ENCODE measurements at regions of chr5 and their contacts with region 1.

Region 1: DNA sequence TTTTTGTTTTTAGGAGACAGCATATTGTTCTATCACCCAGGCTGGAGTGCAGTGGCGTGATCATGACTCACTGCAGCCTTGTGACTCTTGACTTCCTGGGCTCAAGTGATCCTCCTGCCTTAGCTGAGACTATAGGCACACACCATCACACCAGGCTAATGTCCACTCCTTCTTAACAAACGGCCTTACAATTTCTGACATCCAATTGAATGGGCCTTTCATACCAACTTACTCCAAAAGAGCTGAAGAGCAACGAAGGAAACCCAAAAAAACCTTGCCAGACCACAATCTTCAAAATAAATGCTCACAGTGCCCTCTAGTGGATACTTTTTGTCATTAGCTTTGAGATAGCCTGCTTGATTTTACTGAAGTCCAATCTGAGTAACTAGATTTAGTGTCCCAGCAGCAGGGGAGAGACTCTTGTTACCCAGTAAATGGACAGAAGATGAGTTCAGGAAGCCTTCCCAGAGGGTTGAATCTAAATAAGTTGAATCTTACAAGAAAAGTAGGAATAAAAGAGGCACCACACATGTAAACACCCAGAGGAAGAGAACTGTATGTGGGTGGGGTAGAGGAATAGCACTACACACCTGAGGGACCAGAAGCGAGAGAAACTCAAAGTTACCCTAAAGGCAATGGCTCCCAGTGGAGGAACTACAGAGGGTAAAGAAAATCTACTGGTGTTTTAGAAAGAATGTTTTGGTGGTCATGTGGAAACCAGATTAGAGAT is 9.3 kb downstream of the ZNF622 start:
- DNase-seq: peak; percentile 23
- ATAC-seq: peak; percentile 50

Region 2: GRCh38 chr5:16160706-16161105 is 295.6 kb before region 1 on chr5:
- intact Hi-C with region 1: loop called (anchors 10 kb)
- DNase-seq: no peak
- ATAC-seq: peak; percentile 77